ENCODE measurements at regions of chr1 and their contacts with region 1.

Region 1: GRCh38 chr1:157193702-157194391 is 55.7 kb upstream of the ETV3 start:
- DNase-seq: peak; percentile 72 to 83 (median 75)
- ATAC-seq: peak; percentile 66
- H3K4me3 ChIP-seq: no peak overlapping the region
- H3K27ac ChIP-seq: no peak overlapping the region
- H3K4me1 ChIP-seq: peaks cover 2 to 11% of the 10 kb centered on the region in 2 experiments; a peak in 1 of 5 replicates
- H3K27me3 ChIP-seq: peaks cover 11 to 31% of the 10 kb centered on the region in 2 experiments; a peak in 4 of 5 replicates
- CTCF ChIP-seq: peak; percentile 78 to 90 (median 83)
- EP300 ChIP-seq: no peak
- POLR2A ChIP-seq: no peak
- RAD21 ChIP-seq: peak; percentile 74 to 85

Region 2: DNA sequence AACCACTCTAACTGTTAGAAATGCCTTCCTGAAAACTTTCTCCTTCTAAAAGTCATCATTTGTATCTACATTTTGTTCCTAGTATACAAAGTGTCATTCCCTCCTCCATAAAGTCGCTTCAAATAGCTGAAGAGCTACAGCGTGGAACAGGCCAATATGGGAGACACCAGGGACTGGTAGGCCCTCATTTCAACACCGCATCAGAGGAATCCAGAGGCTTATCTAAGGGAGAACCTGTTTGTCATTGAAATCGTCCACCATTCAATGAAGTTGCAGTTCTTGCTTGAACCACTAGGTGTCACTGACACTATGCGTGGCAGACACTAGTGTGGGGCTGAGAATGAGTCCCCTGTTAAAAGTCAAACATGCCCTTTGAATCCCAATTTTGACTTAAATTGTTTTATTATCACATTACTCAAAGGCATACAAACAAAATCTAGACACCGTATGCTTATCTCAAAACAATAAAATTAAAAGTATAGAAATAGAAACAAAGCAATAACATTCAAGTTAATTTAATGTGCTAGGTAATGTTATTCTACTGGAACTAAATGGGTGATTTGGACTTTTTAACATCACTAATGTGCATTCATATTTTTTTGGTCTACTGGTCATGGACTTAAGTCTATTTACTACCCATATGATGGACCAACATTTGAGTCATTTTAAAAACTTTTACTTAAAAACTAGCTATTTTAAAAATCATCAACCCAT is 176.1 kb after region 1 on chr1:
- CTCF ChIA-PET with region 1: interaction called, 4 read pairs
- POLR2A ChIA-PET with region 1: interaction called, 3 read pairs
- in situ Hi-C with region 1: loop called (anchors 5 kb)
- intact Hi-C with region 1: loop called (anchors 5 kb)
- DNase-seq: peak; percentile 61 to 88 (median 66)
- ATAC-seq: peak; percentile 80
- H3K4me3 ChIP-seq: no peak overlapping the region
- H3K27ac ChIP-seq: peak overlapping the region; percentile 13; the same call in 1 of the 3 replicates
- H3K4me1 ChIP-seq: peaks cover 13 to 54% of the 10 kb centered on the region in 2 experiments; a peak in 4 of 5 replicates
- H3K27me3 ChIP-seq: no peaks in the 10 kb centered on the region
- CTCF ChIP-seq: peak; percentile 80 to 86 (median 85)
- EP300 ChIP-seq: no peak
- POLR2A ChIP-seq: no peak
- RAD21 ChIP-seq: peak; percentile 84 to 88